Endothelial cell of umbilical vein (primary cell): ENCODE measurements at regions of chr14 and their contacts with region 1.

Region 1: GRCh38 chr14:61252369-61253063 is 28.6 kb downstream of the TMEM30B start:
- DNase-seq: peak; percentile 90
- H3K4me3 ChIP-seq: no peak overlapping the region
- H3K27ac ChIP-seq: no peak overlapping the region
- H3K4me1 ChIP-seq: peaks cover 27% of the 10 kb centered on the region
- H3K27me3 ChIP-seq: peaks cover 0 to 2% of the 10 kb centered on the region in 2 experiments
- CTCF ChIP-seq: peak; percentile 77 to 91
- POLR2A ChIP-seq: no peak

Region 2: GRCh38 chr14:60266021-60266937 is 986.2 kb before region 1 on chr14:
- CTCF ChIA-PET with region 1: interaction called, 8 read pairs
- POLR2A ChIA-PET with region 1: no interaction called
- dilution Hi-C with region 1: no loop called
- intact Hi-C with region 1: loop called (anchors 10 kb)
- DNase-seq: peak; percentile 44
- H3K4me3 ChIP-seq: no peak overlapping the region
- H3K27ac ChIP-seq: no peak overlapping the region
- H3K4me1 ChIP-seq: no peaks in the 10 kb centered on the region
- H3K27me3 ChIP-seq: no peaks in the 10 kb centered on the region
- CTCF ChIP-seq: peak; percentile 47 to 52
- POLR2A ChIP-seq: no peak

Region 3: DNA sequence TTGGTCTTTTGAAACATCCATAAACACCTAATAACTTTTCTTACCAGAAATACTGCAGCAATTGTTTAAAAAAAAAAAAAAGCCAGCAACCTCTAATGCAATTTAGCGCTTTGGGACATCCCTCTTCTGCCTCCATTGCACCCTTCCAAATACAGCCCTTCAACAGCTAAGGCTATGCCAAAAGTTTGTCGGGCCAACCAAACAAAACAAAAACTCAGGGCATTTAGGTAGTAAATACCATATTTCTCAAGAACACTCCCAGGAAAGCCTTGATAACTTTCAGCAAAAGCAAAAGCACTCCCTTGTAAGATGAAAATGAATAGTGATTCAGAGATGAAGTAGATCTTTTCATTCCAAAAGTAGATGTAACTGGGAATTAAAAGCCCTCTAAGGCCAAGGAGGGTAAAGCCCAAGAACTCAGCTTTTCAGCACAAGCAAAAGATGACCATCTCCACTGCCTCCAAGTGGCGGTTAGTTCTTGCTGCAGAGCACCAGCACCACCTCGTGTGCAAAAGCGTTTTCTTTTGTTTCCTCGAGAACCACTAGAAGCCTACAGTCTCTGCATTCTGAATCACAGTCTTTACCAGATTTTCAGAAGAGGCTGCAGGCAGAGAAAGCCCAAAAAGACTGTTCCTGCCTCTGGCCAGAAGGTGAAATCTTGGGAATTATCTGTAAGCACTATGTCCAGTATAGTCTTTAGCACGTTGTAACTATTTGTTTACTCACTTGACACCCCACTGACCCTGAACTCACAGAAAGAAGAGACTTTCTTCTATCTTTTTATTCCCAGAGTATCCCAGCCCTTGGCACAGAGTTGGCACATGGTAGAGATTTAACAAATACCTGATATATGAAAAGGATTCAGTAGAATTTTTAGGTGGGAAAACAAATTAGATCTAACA is 690.4 kb before region 1 on chr14:
- CTCF ChIA-PET with region 1: interaction called, 5 read pairs
- POLR2A ChIA-PET with region 1: no interaction called
- dilution Hi-C with region 1: no loop called
- intact Hi-C with region 1: loop called (anchors 5 kb)
- DNase-seq: peak; percentile 59
- H3K4me3 ChIP-seq: no peak overlapping the region
- H3K27ac ChIP-seq: no peak overlapping the region
- H3K4me1 ChIP-seq: no peaks in the 10 kb centered on the region
- H3K27me3 ChIP-seq: peaks cover 0 to 8% of the 10 kb centered on the region in 2 experiments
- CTCF ChIP-seq: peak; percentile 45 to 70
- POLR2A ChIP-seq: no peak

Region 4: GRCh38 chr14:60656686-60657455 is 595.6 kb before region 1 on chr14:
- CTCF ChIA-PET with region 1: interaction called, 11 read pairs
- POLR2A ChIA-PET with region 1: no interaction called
- dilution Hi-C with region 1: no loop called
- intact Hi-C with region 1: loop called (anchors 1 kb)
- DNase-seq: peak; percentile 65
- H3K4me3 ChIP-seq: peak overlapping the region; percentile 22 to 64 (median 59)
- H3K27ac ChIP-seq: peak overlapping the region; percentile 3
- H3K4me1 ChIP-seq: peaks cover 10% of the 10 kb centered on the region
- H3K27me3 ChIP-seq: peaks cover 35 to 44% of the 10 kb centered on the region in 2 experiments
- CTCF ChIP-seq: peak; percentile 39 to 59
- POLR2A ChIP-seq: no peak

Region 5: DNA sequence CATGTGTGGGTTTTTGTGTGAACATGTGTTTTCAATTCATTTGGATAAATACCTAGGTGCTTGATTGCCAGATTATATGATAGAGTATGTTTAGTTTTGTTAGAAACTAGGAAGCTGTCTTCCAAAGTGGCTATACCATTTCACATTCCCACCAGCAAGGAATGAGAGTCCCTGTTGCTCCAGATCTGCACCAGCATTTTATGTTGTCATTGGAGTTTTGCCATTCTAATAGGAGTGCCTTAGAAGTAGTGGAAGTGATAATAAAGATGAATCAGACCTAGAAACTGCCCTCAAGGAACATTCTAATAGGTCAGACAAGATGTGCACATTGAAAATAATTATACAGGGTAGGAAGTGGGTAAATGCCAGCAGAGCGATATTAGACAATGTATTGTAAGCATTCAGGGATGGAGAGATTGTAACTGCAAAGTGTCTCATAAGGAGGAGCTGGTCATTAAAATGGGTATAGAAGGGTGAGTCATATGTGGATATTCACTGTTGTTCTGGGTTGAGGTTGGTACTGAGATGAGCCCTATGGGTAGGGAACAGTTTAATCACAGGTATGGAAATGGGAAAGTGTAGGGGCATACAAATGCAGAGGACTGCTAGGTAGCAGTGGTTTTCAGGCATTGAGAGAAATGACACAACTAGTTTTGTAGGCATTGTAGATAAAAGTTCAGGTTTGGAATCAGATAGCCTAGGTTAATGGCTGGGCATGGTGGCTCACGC is 446.5 kb before region 1 on chr14:
- CTCF ChIA-PET with region 1: no interaction called
- POLR2A ChIA-PET with region 1: no interaction called
- dilution Hi-C with region 1: no loop called
- intact Hi-C with region 1: loop called (anchors 10 kb)
- DNase-seq: peak; percentile 9
- H3K4me3 ChIP-seq: no peak overlapping the region
- H3K27ac ChIP-seq: no peak overlapping the region
- H3K4me1 ChIP-seq: peaks cover 8% of the 10 kb centered on the region
- H3K27me3 ChIP-seq: no peaks in the 10 kb centered on the region
- CTCF ChIP-seq: no peak
- POLR2A ChIP-seq: no peak

Region 6: DNA sequence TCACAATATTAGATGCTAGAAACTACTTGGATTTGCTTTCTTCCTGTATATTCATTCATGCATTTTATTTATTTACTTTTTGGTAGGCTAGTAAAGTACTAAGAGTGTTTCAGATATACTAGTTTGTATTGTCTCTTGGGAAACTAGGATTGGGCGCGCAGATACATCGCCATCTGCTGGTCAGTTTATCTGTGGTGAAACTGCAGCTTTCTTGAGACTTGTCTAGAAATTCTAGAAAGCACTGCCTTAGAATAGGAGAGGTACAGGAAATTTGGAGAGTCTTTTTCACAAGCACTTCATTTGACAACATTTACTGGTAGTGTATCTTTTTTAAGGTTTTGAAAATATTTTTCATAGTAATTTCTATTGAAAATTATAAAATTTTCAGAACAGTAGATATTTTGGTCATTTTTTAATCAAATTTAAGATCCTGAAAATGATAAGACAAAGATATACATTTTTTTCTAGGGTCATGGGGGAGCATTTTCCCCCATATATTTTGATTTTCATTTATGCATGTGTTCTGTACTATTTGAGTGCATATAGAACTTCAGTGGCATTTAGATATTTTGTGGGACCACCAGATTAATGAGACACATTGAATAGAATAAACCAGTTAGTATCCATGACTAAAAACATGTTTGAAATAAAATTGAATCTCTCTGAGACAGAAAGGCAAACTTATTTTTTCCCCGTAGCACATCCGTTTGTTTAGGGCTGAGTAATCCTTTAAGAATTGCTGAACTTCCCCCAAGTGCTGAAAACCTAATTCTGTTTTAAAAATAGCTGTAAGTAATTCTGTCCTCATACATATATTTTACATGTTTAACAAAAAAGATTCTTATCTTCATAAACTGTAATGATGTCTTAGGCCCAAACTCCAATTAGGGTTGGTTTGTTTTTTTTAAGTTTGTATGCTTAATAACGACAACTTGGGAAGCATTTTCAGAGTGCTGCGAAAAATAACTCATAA is 227.0 kb before region 1 on chr14:
- CTCF ChIA-PET with region 1: interaction called, 10 read pairs
- POLR2A ChIA-PET with region 1: no interaction called
- dilution Hi-C with region 1: no loop called
- intact Hi-C with region 1: loop called (anchors 1 kb)
- DNase-seq: peak; percentile 80
- H3K4me3 ChIP-seq: peak overlapping the region in 1 of 3 experiments; percentile 46
- H3K27ac ChIP-seq: peak overlapping the region; percentile 89
- H3K4me1 ChIP-seq: peaks cover 21% of the 10 kb centered on the region
- H3K27me3 ChIP-seq: no peaks in the 10 kb centered on the region
- CTCF ChIP-seq: peak; percentile 66 to 68
- POLR2A ChIP-seq: no peak

Region 7: DNA sequence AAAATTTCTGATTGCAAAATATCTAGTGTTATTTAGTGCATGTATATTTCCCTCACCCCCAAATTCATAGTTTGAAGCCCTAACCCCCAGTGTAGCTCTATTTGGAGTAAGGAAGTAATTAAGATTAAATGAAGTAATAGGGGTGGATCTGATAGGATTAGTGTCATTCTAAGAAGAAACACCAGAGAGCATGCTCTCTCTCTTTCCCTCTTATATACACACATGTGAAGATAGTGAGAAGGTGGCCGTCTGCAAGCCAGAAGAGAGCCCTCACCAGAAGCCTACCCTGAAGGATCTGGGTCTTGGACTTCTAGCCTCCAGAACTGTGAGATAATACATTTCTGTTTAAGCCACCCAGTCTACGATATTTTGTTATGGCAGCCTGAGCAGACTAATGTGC is 91.7 kb before region 1 on chr14:
- CTCF ChIA-PET with region 1: no interaction called
- POLR2A ChIA-PET with region 1: no interaction called
- dilution Hi-C with region 1: no loop called
- intact Hi-C with region 1: no loop called
- DNase-seq: no peak
- H3K4me3 ChIP-seq: no peak overlapping the region
- H3K27ac ChIP-seq: no peak overlapping the region
- H3K4me1 ChIP-seq: no peaks in the 10 kb centered on the region
- H3K27me3 ChIP-seq: no peaks in the 10 kb centered on the region
- CTCF ChIP-seq: no peak
- POLR2A ChIP-seq: no peak